ENCODE measurements at regions of chr5 and their contacts with region 1.

Region 1: DNA sequence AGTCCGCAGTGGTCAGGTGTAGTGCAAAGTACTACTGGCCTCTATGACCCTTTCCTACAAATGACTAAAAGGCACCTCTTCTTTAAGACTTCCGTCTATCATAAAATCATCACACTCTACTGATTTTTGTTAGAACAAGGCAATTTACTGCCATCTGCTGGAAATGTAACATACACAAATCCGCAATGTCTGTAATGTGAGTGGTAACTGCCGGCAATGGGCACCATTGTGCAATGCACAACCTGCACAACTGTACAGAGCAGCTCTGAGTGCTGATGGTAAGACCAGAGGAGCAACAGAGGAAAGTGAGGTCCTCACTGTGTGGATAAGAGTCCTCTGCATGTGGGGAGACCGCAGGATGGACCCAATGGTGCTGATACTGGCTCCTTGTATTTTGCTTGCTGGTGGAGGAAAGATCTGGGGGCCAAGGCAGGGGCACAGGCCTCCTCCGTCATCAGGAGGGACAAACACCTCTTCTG is 103.7 kb downstream of the ATPSCKMT start:
- DNase-seq: no peak

Region 2: DNA sequence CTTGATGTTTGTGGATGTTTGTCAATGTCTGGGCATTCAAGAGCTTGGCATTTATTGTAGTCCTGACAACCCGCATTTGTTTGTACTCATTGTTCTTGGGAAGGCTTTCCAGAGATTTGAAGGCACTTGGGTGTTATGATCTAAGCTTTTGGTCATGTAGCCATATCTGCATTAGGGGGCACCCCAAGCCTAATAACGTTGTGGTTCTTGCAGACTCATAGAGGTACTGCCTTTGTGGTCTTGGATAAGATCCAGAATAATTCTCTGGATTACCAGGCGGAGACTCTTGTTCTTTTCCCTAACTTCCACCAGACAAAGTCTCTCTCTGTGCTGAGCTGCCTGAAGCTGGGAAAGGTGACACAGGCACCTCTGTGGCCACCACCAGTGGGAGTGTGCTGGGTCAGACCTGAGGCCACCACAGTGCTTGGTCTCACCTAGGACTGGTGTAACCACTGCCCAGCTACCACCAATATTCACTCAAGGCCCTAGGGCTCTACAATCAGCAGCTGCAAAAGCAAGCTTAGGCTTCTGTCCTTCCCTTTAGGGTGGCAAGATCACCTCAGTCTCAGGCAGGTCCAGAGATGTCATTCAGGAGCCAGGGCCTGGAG is 371.4 kb before region 1 on chr5:
- intact Hi-C with region 1: loop called (anchors 10 kb)
- DNase-seq: peak in 1 of 10 donors; percentile 30

Region 3: DNA sequence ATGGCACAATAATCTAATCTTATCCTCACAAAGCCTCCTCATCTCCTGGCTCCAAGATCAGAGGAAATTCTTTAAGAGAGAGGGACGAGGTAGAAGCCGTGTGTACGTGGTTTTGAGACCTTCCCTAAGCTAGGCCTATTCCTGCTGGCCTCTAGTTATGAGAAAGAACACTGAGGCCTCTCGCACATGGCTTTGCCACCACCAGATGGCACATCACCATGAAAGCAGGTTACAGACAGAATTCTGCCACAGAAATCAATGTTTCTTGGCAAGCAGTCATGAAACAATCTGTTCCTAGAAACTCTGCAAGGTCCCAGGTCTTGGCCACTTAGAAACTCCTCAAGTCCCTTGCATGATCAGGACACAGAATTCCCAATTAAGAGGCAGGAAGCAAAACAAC is 247.6 kb before region 1 on chr5:
- intact Hi-C with region 1: loop called (anchors 5 kb)
- DNase-seq: peak in 3 of 10 donors; percentile 21 to 44 (median 34)

Region 4: DNA sequence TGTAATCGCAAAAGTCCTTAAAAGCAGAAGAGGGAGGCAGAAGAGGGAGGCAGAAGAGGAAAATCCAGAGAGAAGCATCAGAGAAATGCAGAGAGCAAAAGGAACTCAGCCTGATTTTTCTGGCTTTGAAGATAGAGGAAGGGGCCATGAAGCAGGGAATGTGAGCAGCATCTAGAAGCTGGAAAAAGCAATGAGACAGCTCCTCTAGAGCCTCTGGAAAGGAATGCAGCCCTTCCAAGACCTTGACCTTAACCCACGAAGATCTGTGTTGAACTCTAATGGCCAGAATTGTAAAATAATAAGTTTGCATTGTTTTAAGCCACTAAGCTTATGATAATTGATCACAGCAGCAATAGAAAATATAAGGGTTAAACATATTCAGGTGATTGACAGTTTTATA is 55.9 kb before region 1 on chr5:
- intact Hi-C with region 1: no loop called
- DNase-seq: no peak

Region 5: GRCh38 chr5:10201223-10201868 is 55.4 kb after region 1 on chr5:
- intact Hi-C with region 1: no loop called
- DNase-seq: no peak